Right ventricle myocardium inferior (tissue), 1 donor: ENCODE measurements at regions of chr19 and their contacts with region 1.

Region 1: GRCh38 chr19:1568320-1569019 is at the start of gene MEX3D:
- DNase-seq: peak; percentile 90
- ATAC-seq: peak; percentile 80
- total RNA-seq, gene MEX3D: 9.6 TPM

Region 2: GRCh38 chr19:1551068-1552040 is 17.1 kb before region 1 on chr19:
- intact Hi-C with region 1: no loop called
- DNase-seq: no peak
- ATAC-seq: no peak

Region 3: DNA sequence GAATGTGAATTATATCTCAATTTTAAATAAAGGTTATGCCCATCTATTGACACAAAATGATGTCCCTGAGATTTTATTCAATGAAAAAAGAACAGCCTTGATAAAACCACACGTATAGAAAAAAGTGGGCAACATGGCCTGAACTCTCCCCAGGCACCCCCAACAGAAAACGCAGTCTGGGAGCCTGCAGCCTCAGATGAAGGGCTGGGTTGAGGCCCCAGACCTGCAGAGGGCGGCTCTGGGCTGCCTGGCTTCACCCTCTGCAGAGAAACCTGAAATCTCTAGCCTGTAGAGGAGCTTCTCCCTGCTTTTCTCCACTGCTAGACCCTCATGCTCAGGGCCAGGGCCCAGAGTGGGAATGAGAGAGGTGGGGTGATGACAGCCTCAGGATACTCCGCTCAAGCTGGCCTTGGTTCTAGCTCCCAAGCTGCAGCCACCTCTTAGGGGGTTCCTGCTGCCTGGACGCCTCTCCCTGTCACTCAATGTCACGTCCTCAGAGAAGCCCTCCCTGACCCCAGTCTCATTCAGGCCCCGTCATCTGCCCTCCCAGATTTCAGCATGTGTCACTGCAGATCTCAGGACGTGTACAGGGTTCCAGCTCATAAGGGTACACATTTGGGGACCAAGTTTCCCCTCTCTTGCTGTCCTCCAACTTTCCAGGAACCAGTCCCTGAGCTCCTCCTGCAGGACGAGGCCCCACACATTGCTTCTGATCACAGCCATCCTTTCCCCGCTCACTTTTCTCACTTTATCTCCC is 22.3 kb after region 1 on chr19:
- intact Hi-C with region 1: loop called (anchors 2 kb)
- DNase-seq: no peak
- ATAC-seq: no peak

Region 4: DNA sequence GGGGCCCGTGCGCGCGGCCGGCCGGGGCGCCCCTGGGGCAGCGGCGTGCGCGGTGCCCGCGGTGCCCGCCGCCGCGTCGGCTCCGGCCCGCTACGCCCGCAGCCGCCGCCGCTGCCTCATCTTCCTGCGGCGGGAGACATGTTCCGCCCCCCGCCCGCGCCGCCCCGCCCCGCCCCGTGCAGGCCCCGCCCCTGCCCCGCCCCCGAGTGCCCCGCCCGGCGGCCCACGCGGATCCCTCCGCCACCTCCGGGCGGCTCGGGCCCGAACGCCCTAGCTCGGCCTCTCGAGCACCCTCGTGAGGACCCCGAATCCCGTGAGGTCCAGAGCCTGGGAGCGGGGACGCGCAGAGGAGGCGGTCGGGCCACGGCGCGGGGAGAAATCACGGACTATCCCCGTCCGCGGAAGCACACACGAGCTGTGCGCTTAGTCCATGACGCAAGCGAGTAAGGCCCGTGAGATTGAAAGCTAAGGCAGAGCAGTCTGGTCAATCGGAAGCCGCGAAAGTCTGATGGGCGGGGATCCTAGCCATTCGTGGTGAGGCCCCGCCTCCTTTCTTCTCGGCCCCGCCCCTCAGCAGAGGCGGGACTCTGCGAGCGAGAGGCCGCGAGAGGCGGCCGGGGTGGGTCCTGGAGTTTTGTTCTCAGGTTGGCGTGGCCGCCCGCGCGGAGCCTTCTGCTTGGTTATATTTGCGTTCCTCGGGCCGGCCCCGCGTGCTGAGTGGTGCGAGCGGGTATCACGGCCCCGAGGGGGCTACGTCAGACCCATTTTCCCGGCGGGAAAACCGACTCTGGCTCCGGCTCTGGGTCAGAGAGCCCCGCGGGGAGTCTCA is 84.2 kb after region 1 on chr19 and contains the start of gene TCF3:
- intact Hi-C with region 1: loop called (anchors 5 kb)
- DNase-seq: peak; percentile 99
- ATAC-seq: peak; percentile 99
- total RNA-seq, gene TCF3: 25.3 TPM